Activated T-helper 1 cell treated with anti-CD3 and anti-CD28 coated beads, Interleukin-12 subunit alpha, Interleukin-12 subunit beta, Interleukin-2, Interleukin-4 antibody, amounts not matched to agents 30 ng/mL and 10 ng/mL and 1 ng/mL, durations not matched to agents 14 hours and 24 hours and 36 hours (primary cell): ENCODE measurements at regions of chr2 and their contacts with region 1.

Region 1: GRCh38 chr2:44087036-44087713 is 81.5 kb upstream of the PPM1B start:
- DNase-seq: peak; percentile 77
- H3K4me3 Mint-ChIP-seq: peak overlapping the region; percentile 76
- H3K27ac Mint-ChIP-seq: peak overlapping the region; percentile 81
- H3K4me1 Mint-ChIP-seq: peaks cover 23% of the 10 kb centered on the region
- H3K27me3 Mint-ChIP-seq: no peaks in the 10 kb centered on the region

Region 2: GRCh38 chr2:44120428-44120827 is 33.3 kb after region 1 on chr2:
- intact Hi-C with region 1: loop called (anchors 1 kb)
- DNase-seq: peak; percentile 1
- H3K4me3 Mint-ChIP-seq: no peak overlapping the region
- H3K27ac Mint-ChIP-seq: no peak overlapping the region
- H3K4me1 Mint-ChIP-seq: peaks cover 6% of the 10 kb centered on the region
- H3K27me3 Mint-ChIP-seq: peaks cover 2% of the 10 kb centered on the region

Region 3: DNA sequence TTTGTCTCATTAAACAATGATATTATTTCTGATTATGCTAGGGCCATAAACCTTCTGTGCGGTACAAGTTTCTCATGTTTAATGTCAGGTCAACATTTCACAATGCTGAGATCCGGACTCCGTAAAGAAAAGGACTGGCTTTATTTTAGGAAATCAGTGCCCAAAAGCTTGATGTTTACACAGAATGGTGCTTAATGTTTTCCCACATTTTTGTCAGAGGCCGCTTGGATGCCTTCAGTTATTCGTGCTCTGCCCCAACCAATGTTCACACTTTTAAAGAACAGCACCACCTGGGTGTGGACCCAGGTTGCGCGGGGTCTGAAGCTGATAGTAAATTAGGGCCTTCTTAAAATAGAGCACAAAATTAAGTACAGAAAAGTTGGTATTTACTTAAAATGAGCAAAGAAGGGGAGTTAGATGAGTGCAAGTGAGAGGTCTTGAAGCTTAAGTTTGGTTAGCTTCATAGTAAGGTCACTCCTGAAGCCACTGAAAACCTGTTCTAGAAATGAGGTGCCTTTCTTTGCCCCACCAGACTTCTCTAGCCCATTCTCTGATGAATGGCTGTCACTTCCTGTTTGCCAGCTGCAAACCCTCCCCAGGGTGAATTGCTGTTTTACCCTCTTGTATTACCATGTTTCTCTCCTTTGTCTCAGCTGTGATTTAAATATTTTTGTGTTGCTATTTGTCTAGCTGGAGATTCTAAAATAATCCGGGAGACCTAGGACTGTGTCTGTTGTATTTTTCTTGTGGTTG is 208.6 kb after region 1 on chr2:
- intact Hi-C with region 1: loop called (anchors 1 kb)
- DNase-seq: no peak
- H3K4me3 Mint-ChIP-seq: no peak overlapping the region
- H3K27ac Mint-ChIP-seq: no peak overlapping the region
- H3K4me1 Mint-ChIP-seq: no peaks in the 10 kb centered on the region
- H3K27me3 Mint-ChIP-seq: no peaks in the 10 kb centered on the region

Region 4: DNA sequence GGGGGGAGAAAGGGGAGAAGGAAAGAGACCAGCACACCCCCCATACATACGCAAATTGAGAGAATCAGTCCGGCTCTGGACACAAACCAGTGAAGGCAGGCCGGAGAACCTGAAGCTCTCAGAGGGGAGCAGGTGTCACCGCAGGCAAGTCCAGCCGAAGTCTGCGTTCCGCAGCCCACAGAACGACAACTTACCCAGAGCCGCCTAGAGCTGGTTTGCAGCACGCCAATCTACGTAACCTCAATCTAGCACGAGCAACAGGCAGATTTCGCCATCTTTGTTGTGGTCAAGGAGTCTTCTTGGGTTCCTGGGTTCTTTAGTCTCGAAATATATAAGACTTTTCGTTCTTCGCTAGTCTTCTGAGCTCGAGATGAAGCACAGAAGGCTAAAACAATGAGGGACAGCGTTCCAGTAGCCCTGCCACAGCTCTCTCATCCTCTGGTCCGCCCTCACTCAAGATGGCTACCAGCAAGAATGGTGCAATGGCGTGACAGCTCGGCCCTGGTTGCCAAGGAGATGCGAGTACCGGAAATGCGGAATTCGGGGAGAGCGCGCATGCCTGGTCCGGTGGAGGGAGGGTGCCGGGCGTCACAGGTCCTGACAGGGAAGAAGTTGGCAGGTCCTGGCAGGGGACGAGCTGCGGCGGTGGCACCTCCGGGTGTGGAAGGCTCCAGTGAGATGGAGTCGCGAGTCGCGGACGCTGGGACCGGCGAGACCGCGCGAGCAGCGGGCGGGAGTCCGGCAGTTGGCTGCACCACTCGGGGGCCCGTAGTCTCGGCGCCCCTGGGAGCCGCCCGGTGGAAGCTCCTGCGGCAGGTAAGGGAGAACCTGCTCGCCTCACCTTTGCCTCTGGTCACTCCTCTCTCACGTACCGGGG is 274.4 kb after region 1 on chr2 and contains the starts of genes CAMKMT and PREPL:
- intact Hi-C with region 1: loop called (anchors 2 kb)
- DNase-seq: peak; percentile 97
- H3K4me3 Mint-ChIP-seq: peak within 1 kb of the TSS; percentile 99
- H3K27ac Mint-ChIP-seq: peak within 1 kb of the TSS; percentile 100
- H3K4me1 Mint-ChIP-seq: peaks cover 46% of the 10 kb centered on the region
- H3K27me3 Mint-ChIP-seq: no peaks in the 10 kb centered on the region
- total RNA-seq, gene CAMKMT: 13.4 and 14.2 TPM in 2 replicates
- total RNA-seq, gene PREPL: 29.4 and 30.5 TPM in 2 replicates

Region 5: DNA sequence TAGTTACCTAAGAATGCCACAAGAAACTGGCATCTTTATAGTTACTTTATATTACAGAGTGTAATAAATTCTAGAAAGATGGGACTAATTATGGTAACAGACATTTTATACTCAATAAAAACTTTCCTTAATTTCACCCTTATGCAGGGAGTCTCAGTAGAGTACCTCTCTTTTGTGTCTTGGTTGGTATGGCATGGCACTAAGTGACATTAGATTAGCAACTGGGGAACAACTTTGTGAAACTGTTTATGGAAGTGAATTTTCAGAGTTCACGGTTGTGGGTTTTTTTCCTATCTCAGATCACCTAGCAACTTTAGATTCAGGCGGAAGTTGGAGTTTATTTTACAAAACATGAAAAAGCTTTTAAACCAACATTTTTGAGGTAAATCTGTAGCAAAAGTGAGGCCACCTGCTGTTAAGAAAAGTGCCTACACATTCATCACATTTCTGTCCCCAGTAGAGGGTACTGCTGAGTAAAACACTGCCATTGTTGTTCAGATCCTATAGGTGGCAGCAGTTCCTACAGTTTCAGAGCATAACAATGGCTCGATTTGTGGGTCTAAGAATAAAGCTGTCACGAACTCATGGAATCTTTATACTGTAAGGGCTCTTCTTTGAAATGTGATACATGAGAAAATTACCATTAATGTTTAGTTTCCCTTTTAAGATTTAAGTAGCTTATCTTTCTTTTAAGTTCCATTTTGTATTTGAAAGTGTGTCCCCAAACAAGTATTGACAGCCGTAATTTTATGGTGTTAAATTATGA is 392.1 kb after region 1 on chr2:
- intact Hi-C with region 1: loop called (anchors 1 kb)
- DNase-seq: peak; percentile 24
- H3K4me3 Mint-ChIP-seq: no peak overlapping the region
- H3K27ac Mint-ChIP-seq: no peak overlapping the region
- H3K4me1 Mint-ChIP-seq: no peaks in the 10 kb centered on the region
- H3K27me3 Mint-ChIP-seq: no peaks in the 10 kb centered on the region

Region 6: DNA sequence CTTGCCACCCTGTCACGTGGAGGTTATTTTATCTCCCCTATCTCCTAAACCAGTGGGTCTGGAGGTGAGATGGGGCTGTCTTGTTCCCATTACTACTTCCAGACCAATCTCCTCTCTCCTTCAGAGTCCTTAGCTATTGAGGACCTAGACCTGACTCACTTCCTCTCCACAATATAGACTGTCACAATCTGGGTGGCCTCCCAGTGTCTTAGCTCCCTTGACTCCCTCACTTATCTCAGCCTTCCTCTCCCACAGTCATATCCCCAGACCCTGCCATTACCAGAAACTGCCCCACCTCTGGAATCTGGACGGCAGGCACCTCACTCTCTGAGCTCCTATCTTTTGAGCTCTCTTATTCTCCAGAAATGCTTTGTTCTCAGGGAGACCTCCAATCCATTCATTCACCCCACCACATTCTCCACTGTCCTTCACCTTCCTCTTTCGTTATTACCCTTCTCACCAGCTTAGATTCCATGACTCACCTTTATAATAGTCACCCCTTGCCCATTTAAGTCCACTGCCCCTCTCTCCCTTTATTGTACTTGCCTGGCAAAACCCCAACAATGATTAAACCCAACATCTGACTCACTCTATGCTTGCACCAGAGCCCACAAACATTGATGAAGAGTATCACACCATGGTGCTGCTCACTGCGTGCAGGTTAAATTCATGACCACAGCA is 831.1 kb after region 1 on chr2:
- intact Hi-C with region 1: no loop called
- DNase-seq: no peak
- H3K4me3 Mint-ChIP-seq: no peak overlapping the region
- H3K27ac Mint-ChIP-seq: no peak overlapping the region
- H3K4me1 Mint-ChIP-seq: no peaks in the 10 kb centered on the region
- H3K27me3 Mint-ChIP-seq: peaks cover 19% of the 10 kb centered on the region